ENCODE measurements at regions of chr1 and their contacts with region 1.

Region 1: DNA sequence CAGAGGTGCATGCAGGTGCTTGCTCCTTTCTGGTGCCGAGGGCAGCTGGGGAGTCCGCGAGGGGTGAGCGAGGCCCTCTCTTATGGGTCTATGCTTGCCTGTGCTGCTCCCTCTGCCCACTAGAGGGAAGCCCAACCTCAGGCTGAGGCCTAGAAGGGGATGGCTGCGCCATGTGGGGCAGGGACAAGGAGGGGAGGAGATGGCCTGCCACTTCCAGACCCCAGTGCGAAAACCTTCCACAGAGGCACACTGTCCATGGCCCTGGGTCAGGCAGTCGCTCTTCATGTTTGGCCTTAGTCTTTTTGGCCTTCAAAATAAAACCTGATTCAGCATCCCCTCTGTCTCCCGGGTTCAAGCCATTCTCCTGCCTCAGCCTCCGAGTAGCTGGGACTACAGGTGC is 14.0 kb downstream of the RHBG start:
- DNase-seq: peak; percentile 75
- H3K4me3 Mint-ChIP-seq: no peak overlapping the region
- H3K27ac Mint-ChIP-seq: no peak overlapping the region
- H3K4me1 Mint-ChIP-seq: peaks cover 4% of the 10 kb centered on the region
- H3K27me3 Mint-ChIP-seq: peaks cover 21% of the 10 kb centered on the region

Region 2: GRCh38 chr1:156356875-156357534 is 26.0 kb before region 1 on chr1:
- CTCF ChIA-PET with region 1: interaction called, 16 read pairs
- intact Hi-C with region 1: no loop called
- DNase-seq: peak; percentile 66
- H3K4me3 Mint-ChIP-seq: no peak overlapping the region
- H3K27ac Mint-ChIP-seq: no peak overlapping the region
- H3K4me1 Mint-ChIP-seq: peaks cover 15% of the 10 kb centered on the region
- H3K27me3 Mint-ChIP-seq: peaks cover 21% of the 10 kb centered on the region

Region 3: DNA sequence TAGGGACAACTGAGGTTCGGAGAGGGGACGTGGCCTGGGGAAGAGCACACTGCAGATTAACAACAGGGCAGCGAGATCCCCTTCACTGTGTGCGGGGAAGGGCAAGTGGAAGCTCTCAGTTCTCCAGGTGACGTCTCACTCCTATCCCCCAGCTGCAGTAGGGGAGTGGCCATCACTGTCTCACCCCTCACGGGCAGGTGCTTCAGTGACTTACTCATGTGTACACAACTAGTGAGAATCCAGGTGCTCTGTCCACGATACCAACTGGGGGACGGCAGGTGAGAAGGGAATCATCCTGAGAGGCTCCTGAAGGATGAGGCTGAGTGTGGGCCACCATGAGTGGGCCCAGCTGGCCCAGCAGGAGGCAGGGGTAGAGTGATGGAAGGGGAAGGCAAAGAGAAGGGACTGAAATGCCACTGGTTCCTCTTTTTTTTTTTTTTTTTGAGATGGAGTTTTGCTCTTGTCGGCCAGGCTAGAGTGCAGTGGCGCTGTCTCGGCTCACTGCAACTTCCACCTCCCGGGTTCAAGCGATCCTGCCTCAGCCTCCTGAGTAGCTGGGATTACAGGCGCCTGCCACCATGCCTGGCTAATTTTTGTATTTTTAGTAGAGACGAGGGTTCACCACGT is 11.9 kb after region 1 on chr1:
- CTCF ChIA-PET with region 1: interaction called, 38 read pairs
- intact Hi-C with region 1: no loop called
- DNase-seq: no peak
- H3K4me3 Mint-ChIP-seq: no peak overlapping the region
- H3K27ac Mint-ChIP-seq: no peak overlapping the region
- H3K4me1 Mint-ChIP-seq: no peaks in the 10 kb centered on the region
- H3K27me3 Mint-ChIP-seq: peaks cover 7% of the 10 kb centered on the region

Region 4: GRCh38 chr1:156421062-156421938 is 38.3 kb after region 1 on chr1:
- CTCF ChIA-PET with region 1: interaction called, 111 read pairs
- intact Hi-C with region 1: loop called (anchors 2 kb)
- DNase-seq: peak; percentile 86
- H3K4me3 Mint-ChIP-seq: peak overlapping the region; percentile 70
- H3K27ac Mint-ChIP-seq: no peak overlapping the region
- H3K4me1 Mint-ChIP-seq: peaks cover 19% of the 10 kb centered on the region
- H3K27me3 Mint-ChIP-seq: peaks cover 80% of the 10 kb centered on the region

Region 5: DNA sequence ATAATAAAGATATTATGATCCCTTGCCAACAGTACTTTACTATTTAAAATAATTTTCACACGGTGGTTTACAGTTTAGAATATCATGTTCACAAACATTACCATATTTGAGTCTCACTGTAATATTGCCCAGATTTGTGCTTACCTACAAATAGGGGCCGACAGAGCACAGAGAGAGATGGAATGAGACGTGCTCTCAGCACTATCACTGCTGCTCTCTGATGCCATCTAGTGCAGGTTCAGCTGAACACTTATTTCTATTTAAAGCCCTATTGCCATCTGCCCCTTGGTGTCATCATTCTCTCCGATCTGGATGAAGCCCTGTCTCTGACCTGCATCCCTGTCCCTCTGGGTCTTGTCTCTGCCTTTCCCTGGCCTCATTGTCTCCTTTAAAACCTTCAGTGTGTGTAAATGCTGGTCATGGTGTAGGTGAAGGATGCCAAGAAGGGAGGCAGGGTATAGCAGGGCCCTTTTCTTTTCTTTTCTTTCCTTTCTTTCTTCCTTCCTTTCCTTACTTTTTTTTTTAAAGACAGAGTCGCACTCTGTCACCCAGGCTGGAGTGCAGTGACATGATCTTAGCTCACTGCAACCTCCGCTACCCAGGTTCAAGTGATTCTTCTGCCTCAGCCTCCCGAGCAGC is 225.1 kb after region 1 on chr1:
- CTCF ChIA-PET with region 1: interaction called, 18 read pairs
- intact Hi-C with region 1: loop called (anchors 1 kb)
- DNase-seq: peak; percentile 85
- H3K4me3 Mint-ChIP-seq: no peak overlapping the region
- H3K27ac Mint-ChIP-seq: no peak overlapping the region
- H3K4me1 Mint-ChIP-seq: peaks cover 10% of the 10 kb centered on the region
- H3K27me3 Mint-ChIP-seq: peaks cover 2% of the 10 kb centered on the region

Measured in activated naive CD4-positive, alpha-beta T cell treated with anti-CD3 and anti-CD28 coated beads for 36 hours (primary cell).